Activated CD4-positive, alpha-beta memory T cell treated with anti-CD3 and anti-CD28 coated beads for 36 hours (primary cell): ENCODE measurements at regions of chr4 and their contacts with region 1.

Region 1: GRCh38 chr4:152640058-152640833 is 39.6 kb downstream of the TMEM154 start:
- DNase-seq: no peak
- H3K4me3 Mint-ChIP-seq: no peak overlapping the region
- H3K27ac Mint-ChIP-seq: no peak overlapping the region
- H3K4me1 Mint-ChIP-seq: peaks cover 42% of the 10 kb centered on the region
- H3K27me3 Mint-ChIP-seq: no peaks in the 10 kb centered on the region

Region 2: DNA sequence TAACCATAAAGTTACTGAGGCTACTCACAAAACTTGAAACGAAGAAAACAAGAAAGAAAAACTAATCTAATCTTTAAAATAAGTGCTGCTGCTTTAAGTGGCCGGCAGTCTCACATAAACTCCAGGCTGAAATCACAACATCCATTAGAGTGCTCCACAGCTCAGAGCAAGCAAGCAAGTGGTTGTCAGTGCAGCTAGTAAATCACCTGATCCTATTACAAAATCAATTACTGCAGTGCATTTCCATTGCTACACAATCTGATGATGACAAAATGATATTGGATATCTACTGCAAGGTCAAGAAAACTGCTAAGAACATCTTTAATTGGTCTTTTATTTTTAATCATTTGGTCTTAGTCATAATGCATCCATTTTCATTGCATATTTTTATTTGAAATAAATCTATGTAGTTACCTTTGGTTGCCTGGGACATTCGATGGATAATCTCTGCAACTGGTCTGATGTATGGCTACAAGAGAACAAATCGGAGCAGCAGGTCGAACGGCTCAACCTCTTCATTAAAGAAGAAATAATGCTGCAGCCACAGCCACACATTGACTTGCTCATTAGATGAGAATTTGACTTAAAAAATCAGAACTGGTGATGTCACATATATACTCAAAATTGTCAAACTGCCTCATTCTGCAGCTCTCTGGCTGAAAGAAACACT is 192.1 kb before region 1 on chr4:
- CTCF ChIA-PET with region 1: interaction called, 17 read pairs
- POLR2A ChIA-PET with region 1: no interaction called
- intact Hi-C with region 1: no loop called
- DNase-seq: no peak
- H3K4me3 Mint-ChIP-seq: no peak overlapping the region
- H3K27ac Mint-ChIP-seq: no peak overlapping the region
- H3K4me1 Mint-ChIP-seq: peaks cover 11% of the 10 kb centered on the region
- H3K27me3 Mint-ChIP-seq: no peaks in the 10 kb centered on the region

Region 3: GRCh38 chr4:152556283-152556682 is 84.0 kb before region 1 on chr4:
- CTCF ChIA-PET with region 1: interaction called, 7 read pairs
- POLR2A ChIA-PET with region 1: no interaction called
- intact Hi-C with region 1: loop called (anchors 1 kb)
- DNase-seq: no peak
- H3K4me3 Mint-ChIP-seq: peak overlapping the region; percentile 57
- H3K27ac Mint-ChIP-seq: peak overlapping the region; percentile 77
- H3K4me1 Mint-ChIP-seq: peaks cover 54% of the 10 kb centered on the region
- H3K27me3 Mint-ChIP-seq: no peaks in the 10 kb centered on the region

Region 4: GRCh38 chr4:152696764-152697261 is 56.6 kb after region 1 on chr4:
- CTCF ChIA-PET with region 1: interaction called, 3 read pairs
- POLR2A ChIA-PET with region 1: no interaction called
- intact Hi-C with region 1: loop called (anchors 5 kb)
- DNase-seq: peak; percentile 84
- H3K4me3 Mint-ChIP-seq: no peak overlapping the region
- H3K27ac Mint-ChIP-seq: peak overlapping the region; percentile 51
- H3K4me1 Mint-ChIP-seq: peaks cover 19% of the 10 kb centered on the region
- H3K27me3 Mint-ChIP-seq: peaks cover 3% of the 10 kb centered on the region

Region 5: GRCh38 chr4:152927737-152928136 is 287.5 kb after region 1 on chr4:
- CTCF ChIA-PET with region 1: no interaction called
- POLR2A ChIA-PET with region 1: no interaction called
- intact Hi-C with region 1: no loop called
- DNase-seq: no peak
- H3K4me3 Mint-ChIP-seq: no peak overlapping the region
- H3K27ac Mint-ChIP-seq: no peak overlapping the region
- H3K4me1 Mint-ChIP-seq: no peaks in the 10 kb centered on the region
- H3K27me3 Mint-ChIP-seq: peaks cover 2% of the 10 kb centered on the region